Astrocyte of the cerebellum (primary cell): ENCODE measurements at regions of chr10 and their contacts with region 1.

Region 1: DNA sequence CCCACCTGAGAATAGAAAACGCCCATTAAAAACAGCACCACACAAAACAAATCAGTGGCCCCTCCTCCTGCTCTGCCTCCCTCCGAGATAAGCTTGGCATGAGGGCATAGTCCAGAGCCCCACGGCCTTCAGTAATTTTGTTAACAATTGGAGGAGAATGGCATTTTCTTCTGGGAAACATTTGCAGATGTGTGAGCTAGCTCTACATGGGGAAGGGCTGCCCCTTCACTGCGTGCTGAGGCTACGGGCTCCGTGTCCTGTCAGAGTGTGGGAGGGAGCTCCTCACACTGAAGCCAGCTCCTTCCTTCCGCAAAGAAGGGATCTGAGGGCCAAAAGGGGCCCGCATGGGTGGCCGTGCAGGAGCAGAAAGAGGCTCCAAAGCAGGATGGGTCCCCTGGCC is 15.2 kb downstream of the GRK5 start:
- DNase-seq: no peak
- H3K4me3 ChIP-seq: no peak overlapping the region
- CTCF ChIP-seq: no peak

Region 2: DNA sequence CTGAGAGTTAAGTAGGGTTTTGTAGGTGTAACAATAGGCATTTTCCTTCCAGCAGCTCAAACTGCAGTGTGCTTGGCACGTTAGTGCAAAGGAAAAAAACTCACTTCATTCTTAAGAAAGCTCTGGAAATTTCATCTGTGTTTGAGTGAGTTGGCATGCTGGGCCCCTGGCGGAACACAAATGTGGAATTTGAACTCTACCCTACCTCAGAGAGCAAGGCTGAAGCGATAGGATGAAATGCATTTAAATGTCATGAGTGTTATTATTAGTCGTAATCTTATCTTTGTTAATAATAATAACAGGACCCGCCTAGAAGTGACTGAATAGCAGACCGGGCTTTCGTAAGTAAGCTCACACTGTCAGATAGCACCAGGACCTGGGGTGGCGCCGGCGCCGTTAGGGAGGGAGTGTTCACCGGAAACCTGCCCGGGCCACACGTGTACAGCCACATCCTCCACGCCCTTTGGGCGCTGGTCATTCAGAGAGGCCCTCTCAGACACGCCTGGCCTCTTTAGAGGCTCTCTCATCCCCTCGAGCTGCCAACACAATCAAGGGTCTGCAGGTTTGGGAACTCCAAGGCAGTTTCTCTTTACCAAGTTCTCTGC is 48.3 kb after region 1 on chr10:
- in situ Hi-C with region 1: loop called (anchors 5 kb)
- DNase-seq: no peak
- H3K4me3 ChIP-seq: no peak overlapping the region
- CTCF ChIP-seq: no peak

Region 3: DNA sequence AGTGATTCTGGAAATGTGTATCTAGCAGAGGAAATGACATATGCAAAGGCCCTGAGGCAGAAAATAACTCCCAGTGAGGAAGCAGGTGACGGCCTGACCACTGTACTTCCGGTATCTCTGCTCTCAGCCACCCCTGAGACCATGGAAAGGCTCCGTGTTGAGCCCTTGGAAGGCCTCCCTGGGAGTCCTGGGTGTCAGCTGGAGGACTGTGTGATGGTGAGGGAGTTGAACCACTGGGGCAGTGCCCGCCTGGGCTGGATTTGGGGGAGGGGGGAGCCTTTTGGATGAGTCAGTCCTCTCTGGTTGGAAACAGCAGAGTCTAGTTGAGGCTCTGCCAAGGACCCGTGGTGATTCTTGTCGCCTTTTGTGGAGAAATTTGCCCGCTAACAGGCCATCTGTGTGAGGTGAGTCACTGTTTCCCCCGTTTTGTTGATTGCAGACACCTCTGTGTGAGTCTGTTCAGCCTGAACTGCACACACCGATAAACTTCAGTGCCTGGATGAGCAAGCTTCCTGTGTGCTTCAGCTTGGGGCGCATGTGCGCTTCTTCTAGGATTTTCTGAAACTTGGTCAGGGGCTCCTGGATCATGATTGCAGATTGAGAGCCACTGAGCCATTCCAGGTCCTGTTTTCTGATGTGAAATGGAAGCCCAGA is 83.5 kb after region 1 on chr10:
- in situ Hi-C with region 1: loop called (anchors 5 kb)
- DNase-seq: peak; percentile 92
- H3K4me3 ChIP-seq: no peak overlapping the region
- CTCF ChIP-seq: no peak

Region 4: GRCh38 chr10:119412244-119413092 is 189.9 kb after region 1 on chr10:
- in situ Hi-C with region 1: loop called (anchors 5 kb)
- DNase-seq: no peak
- H3K4me3 ChIP-seq: no peak overlapping the region
- CTCF ChIP-seq: no peak